CD14-positive monocyte (primary cell): ENCODE measurements at regions of chr10 and their contacts with region 1.

Region 1: DNA sequence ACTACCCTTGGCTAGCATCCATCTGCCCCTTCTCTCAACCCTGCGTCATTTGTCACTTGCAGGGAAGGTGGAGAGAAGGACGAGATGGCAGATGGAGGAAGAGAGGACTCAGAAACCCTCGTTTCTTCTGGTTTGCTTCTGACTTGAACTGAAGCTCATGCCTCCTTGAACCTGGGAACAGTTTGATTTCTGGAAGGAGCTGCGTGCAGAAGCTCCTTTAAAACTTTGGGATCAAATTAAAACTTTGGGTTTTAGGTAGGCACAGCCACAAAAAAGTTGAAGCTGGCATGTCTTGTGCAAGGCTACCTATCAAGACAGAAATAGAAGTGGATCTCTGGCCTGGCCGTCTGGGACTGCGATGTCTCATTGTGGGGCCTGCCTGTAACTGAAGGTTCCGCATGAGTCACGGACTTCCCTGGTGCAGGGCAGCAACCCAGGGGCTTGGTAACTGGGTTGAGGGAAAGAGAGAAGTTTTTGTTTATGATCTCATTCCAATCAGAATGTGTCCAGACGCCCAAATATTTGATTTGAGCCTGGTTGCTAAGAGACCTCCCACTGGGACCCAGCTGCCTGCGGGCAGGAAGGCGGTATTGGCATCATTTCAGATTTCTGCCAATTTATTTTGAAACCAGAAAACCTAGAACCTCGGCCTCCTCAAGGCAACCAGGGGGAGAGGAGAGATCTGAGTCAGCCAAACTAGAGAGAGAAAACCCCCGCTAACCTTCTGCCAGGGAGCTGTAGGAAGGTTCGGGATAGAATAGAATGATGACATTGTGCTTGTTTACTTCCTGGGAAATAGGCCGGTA is 15.8 kb upstream of the CAMK1D start:
- DNase-seq: peak; percentile 89 to 98 (median 96)
- H3K4me3 ChIP-seq: no peak overlapping the region
- H3K4me3 Mint-ChIP-seq: peak overlapping the region in 1 of 2 donors; percentile 80
- H3K27ac ChIP-seq: peak overlapping the region in 1 of 2 donors; percentile 72
- H3K27ac Mint-ChIP-seq: peak overlapping the region; percentile 72 to 90 (median 86)
- H3K4me1 ChIP-seq: peaks cover 18 to 23% of the 10 kb centered on the region in 2 donors
- H3K4me1 Mint-ChIP-seq: peaks cover 14% of the 10 kb centered on the region
- H3K27me3 ChIP-seq: no peaks in the 10 kb centered on the region
- H3K27me3 Mint-ChIP-seq: peaks cover 1 to 11% (median 2%) of the 10 kb centered on the region in 3 donors
- CTCF ChIP-seq: no peak

Region 2: DNA sequence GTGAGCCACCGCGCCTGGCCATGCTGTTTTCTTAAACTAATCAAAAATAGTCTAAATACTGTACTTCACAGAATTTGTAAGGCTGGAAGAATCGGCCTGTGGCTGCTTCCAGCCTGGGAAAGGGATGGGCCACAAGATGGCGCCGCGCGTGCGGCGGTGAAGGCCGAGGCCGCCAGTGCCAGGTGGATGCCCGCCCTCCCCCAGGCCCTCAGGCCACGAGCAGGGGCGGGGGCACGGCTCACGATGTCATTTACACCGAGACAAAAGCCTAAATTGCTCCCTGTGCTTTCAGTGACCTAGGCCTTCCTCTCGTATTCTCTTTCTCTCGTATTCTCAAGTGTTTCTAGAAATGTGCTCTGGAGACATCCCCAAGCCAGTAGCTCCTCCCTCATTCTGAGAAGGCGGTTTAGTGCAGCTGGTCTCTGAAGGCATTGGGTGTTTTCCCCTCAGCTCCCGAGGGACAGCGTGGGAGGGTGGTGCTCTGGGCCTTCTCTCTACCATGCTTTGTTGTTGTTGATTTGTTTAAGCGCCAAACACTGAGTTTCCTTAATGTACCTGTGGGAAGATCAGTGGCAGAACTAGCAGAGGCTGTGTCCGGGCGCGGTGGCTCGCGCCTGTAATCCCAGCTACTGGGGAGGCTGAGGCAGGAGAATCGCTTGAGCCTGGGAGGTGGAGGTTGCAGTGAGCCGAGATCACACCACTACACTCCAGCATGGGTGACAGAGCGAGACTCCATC is 69.2 kb before region 1 on chr10:
- intact Hi-C with region 1: loop called in 1 of 2 experiments (anchors 10 kb)
- DNase-seq: peak; percentile 47 to 59 (median 57)
- H3K4me3 ChIP-seq: peak overlapping the region; percentile 4 to 50 (median 12)
- H3K4me3 Mint-ChIP-seq: peak overlapping the region; percentile 72 to 80
- H3K27ac ChIP-seq: peak overlapping the region; percentile 4 to 41
- H3K27ac Mint-ChIP-seq: peak overlapping the region; percentile 34 to 92 (median 86)
- H3K4me1 ChIP-seq: peaks cover 40 to 45% of the 10 kb centered on the region in 2 donors
- H3K4me1 Mint-ChIP-seq: peaks cover 40% of the 10 kb centered on the region
- H3K27me3 ChIP-seq: no peaks in the 10 kb centered on the region
- H3K27me3 Mint-ChIP-seq: peaks cover 0 to 2% (median 1%) of the 10 kb centered on the region in 3 donors
- CTCF ChIP-seq: peak; percentile 74

Region 3: DNA sequence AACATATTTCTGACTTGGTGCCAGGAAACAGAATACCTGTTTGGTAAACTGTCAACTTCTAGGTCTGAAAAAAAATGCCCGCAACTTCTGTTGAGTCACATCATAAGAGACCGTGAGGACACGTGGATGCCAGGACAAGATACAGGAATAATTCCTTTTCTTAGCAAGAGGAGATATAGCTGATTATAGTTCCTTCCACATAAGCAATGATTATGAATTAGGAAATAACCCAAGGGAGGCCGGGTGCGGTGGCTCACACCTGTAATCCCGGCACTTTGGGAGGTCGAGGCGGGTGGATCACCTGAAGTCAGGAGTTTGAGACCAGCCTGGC is 62.4 kb before region 1 on chr10:
- intact Hi-C with region 1: loop called (anchors 5 to 10 kb)
- DNase-seq: no peak
- H3K4me3 ChIP-seq: peak overlapping the region in 2 of 3 experiments; percentile 9 to 60
- H3K4me3 Mint-ChIP-seq: peak overlapping the region; percentile 57 to 71
- H3K27ac ChIP-seq: peak overlapping the region; percentile 77 to 82
- H3K27ac Mint-ChIP-seq: peak overlapping the region; percentile 87 to 94 (median 90)
- H3K4me1 ChIP-seq: peaks cover 25 to 27% of the 10 kb centered on the region in 2 donors
- H3K4me1 Mint-ChIP-seq: peaks cover 27% of the 10 kb centered on the region
- H3K27me3 ChIP-seq: no peaks in the 10 kb centered on the region
- H3K27me3 Mint-ChIP-seq: peaks cover 0 to 2% (median 0%) of the 10 kb centered on the region in 3 donors
- CTCF ChIP-seq: no peak

Region 4: GRCh38 chr10:12348870-12349628 is 15.5 kb after region 1 on chr10 and contains the start of gene CAMK1D:
- intact Hi-C with region 1: loop called in 1 of 2 experiments (anchors 2 kb)
- DNase-seq: peak; percentile 33 to 82 (median 80)
- H3K4me3 ChIP-seq: peak within 1 kb of the TSS; percentile 61 to 87 (median 83)
- H3K4me3 Mint-ChIP-seq: peak within 1 kb of the TSS; percentile 98 to 99
- H3K27ac ChIP-seq: peak within 1 kb of the TSS; percentile 56 to 79
- H3K27ac Mint-ChIP-seq: peak within 1 kb of the TSS; percentile 88 to 96 (median 93)
- H3K4me1 ChIP-seq: peaks cover 22 to 25% of the 10 kb centered on the region in 2 donors
- H3K4me1 Mint-ChIP-seq: peaks cover 29% of the 10 kb centered on the region
- H3K27me3 ChIP-seq: peaks cover 9 to 38% of the 10 kb centered on the region in 2 donors
- H3K27me3 Mint-ChIP-seq: peaks cover 45 to 51% (median 51%) of the 10 kb centered on the region in 3 donors
- CTCF ChIP-seq: peak; percentile 31
- polyA plus RNA-seq, gene CAMK1D: 6.7 to 11.8 (median 7.1) TPM

Region 5: DNA sequence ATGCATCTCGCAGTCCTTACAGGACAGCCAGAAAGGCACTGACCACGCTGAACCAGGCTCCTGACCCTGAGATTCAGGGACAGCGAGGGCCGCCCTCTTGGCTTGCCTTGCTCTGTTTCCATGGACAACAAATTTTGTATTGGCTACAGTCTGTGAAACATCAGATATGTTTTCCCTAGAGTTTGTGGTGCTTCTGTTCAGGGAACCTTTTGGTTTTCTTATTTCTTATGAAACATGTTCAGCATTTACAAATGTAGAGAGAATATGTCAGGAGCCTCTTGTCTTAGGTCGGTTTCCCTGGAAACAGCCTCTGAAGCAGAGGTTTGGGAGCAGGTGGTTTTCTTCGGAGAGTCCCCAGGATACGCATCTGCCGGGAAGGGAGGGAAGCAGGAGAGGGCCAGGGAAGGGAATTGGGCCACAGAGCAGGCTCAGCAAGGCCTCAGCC is 407.8 kb after region 1 on chr10:
- intact Hi-C with region 1: no loop called
- DNase-seq: no peak
- H3K4me3 ChIP-seq: no peak overlapping the region
- H3K4me3 Mint-ChIP-seq: no peak overlapping the region
- H3K27ac ChIP-seq: no peak overlapping the region
- H3K27ac Mint-ChIP-seq: no peak overlapping the region
- H3K4me1 ChIP-seq: peaks cover 0 to 2% of the 10 kb centered on the region in 2 donors
- H3K4me1 Mint-ChIP-seq: peaks cover 4% of the 10 kb centered on the region
- H3K27me3 ChIP-seq: no peaks in the 10 kb centered on the region
- H3K27me3 Mint-ChIP-seq: peaks cover 0 to 5% (median 1%) of the 10 kb centered on the region in 3 donors
- CTCF ChIP-seq: no peak